Activated CD8-positive, alpha-beta T cell treated with anti-CD3 and anti-CD28 coated beads, Interleukin-2, amount 10 ng/mL, durations not matched to agents 7 days and 5 days (primary cell): ENCODE measurements at regions of chr2 and their contacts with region 1.

Region 1: GRCh38 chr2:113248997-113249770 is 29.5 kb downstream of the PAX8 start:
- DNase-seq: peak; percentile 86
- ATAC-seq: peak; percentile 69
- H3K4me3 Mint-ChIP-seq: no peak overlapping the region
- H3K27ac Mint-ChIP-seq: peak overlapping the region; percentile 77
- H3K4me1 Mint-ChIP-seq: peaks cover 56% of the 10 kb centered on the region
- H3K27me3 Mint-ChIP-seq: no peaks in the 10 kb centered on the region

Region 2: DNA sequence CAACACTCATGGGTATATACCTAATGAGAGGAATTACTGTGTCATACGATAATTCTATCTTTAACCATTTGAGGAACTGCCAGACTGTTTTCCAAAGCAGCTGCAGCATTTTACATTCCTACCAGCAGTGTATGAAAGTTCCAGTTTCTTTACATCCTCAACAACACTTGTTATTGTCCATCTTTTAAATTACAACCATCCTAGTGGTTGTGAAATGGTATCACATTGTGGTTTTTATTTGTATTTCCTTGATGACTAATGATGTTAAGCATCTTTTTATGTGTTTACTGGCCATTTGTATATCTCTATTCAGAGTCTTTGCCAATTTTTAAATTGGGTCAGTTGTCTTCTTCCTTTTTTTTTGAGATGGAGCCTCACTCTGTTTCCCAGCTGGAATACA is 480.8 kb before region 1 on chr2:
- CTCF ChIA-PET with region 1: no interaction called
- POLR2A ChIA-PET with region 1: no interaction called
- DNase-seq: no peak
- ATAC-seq: no peak
- H3K4me3 Mint-ChIP-seq: no peak overlapping the region
- H3K27ac Mint-ChIP-seq: no peak overlapping the region
- H3K4me1 Mint-ChIP-seq: peaks cover 32% of the 10 kb centered on the region
- H3K27me3 Mint-ChIP-seq: no peaks in the 10 kb centered on the region

Region 3: DNA sequence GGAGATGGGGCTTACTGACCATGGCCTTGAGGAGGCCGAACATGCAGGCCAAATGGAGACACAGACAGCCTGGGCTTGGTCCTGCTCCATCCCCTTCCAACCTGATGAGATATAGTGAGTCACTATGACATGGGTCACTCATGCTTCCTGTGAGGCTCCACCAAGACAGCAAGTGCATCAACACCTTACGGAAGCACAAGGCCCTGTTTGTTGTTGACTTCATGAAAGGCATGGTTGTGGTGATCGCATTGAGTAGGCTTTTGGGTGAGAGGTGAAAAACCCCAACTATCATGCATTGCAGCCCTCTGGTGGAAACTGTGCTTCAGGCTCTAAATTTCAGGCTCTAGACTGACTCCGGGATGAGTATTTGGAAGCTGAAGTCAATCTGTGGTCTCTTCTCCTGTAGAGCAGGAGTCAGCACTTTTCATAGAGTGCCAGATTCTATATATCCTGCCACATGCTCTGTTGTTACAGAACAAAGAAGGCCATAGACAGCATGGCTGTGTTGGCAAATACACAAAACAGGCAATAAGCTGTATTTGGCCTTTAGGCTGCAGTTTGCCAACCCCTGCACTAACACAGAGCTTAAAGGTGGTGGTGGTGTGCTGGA is 328.2 kb before region 1 on chr2:
- CTCF ChIA-PET with region 1: no interaction called
- POLR2A ChIA-PET with region 1: no interaction called
- DNase-seq: peak; percentile 24
- ATAC-seq: peak; percentile 49
- H3K4me3 Mint-ChIP-seq: no peak overlapping the region
- H3K27ac Mint-ChIP-seq: peak overlapping the region; percentile 41
- H3K4me1 Mint-ChIP-seq: peaks cover 8% of the 10 kb centered on the region
- H3K27me3 Mint-ChIP-seq: peaks cover 2% of the 10 kb centered on the region

Region 4: DNA sequence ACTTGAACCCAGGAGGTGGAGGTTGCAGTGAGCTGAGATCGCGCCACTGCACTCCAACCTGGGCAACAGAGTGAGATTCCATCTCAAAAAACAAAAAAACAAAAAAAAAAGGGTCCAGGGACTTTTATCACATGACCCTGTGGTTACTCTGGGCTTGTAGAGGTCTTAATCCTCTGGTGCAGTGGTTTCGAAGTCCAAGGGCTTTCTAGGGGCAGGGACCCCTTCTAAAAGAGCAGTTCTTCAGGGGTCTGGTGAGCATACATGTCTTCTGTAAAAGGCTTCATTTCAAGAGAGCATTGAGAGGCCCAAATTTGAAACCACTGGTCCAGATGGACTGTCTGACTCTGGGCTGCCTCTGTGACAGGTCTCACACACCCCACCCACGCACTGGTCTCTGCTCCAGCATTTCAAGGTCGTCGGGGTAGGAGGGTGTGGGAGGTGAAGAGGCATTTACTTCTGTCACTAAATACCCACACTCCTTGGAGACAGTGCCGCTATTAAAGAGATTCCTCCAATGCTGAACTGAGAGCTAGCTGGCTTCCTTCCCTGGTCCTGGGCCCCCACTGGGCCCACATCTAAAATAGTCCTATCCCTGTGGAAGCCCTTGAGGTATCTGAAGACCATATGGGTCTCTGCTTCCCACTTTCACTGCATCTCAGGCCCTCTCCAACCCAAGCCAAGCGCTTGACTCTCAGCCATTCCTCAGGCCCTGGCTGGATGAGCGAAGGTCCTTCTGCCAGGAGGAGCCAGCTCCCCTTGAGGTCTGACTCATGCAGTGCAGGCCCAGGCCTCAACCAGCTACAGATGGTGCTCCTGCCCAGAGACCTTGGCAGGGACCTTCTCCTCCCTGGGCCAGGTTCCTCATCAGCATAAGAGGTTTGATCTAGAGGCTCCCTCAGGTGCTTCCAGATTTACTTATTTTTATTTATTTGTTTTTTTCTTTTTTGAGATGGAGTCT is 15.3 kb before region 1 on chr2:
- CTCF ChIA-PET with region 1: interaction called, 28 read pairs
- POLR2A ChIA-PET with region 1: interaction called, 3 read pairs
- DNase-seq: no peak
- ATAC-seq: no peak
- H3K4me3 Mint-ChIP-seq: no peak overlapping the region
- H3K27ac Mint-ChIP-seq: no peak overlapping the region
- H3K4me1 Mint-ChIP-seq: peaks cover 33% of the 10 kb centered on the region
- H3K27me3 Mint-ChIP-seq: peaks cover 2% of the 10 kb centered on the region

Region 5: GRCh38 chr2:113273027-113273551 is 23.9 kb after region 1 on chr2:
- CTCF ChIA-PET with region 1: interaction called, 65 read pairs
- POLR2A ChIA-PET with region 1: interaction called, 4 read pairs
- DNase-seq: peak; percentile 73
- ATAC-seq: peak; percentile 96
- H3K4me3 Mint-ChIP-seq: peak overlapping the region; percentile 43
- H3K27ac Mint-ChIP-seq: no peak overlapping the region
- H3K4me1 Mint-ChIP-seq: peaks cover 35% of the 10 kb centered on the region
- H3K27me3 Mint-ChIP-seq: peaks cover 67% of the 10 kb centered on the region

Region 6: DNA sequence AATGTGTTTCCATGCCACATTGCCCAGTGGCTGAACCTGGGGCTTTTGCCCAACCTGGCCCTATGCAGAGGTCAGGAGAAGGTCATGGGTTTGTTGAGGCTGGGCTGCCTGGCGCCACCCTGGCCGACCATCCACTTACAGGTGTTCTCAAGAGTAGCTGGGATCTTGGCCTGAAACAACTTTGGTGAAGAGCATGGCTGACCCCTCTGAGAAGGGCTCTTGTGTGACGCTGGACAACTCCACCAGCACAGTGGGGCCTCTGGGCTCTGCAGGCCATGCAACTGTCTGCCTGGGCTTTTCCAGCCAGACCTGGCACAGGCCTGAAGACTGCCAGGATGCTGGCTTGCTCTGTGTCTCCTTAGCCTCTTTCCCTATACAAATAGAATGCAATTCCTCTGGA is 111.9 kb after region 1 on chr2:
- CTCF ChIA-PET with region 1: interaction called, 15 read pairs
- POLR2A ChIA-PET with region 1: no interaction called
- DNase-seq: no peak
- ATAC-seq: no peak
- H3K4me3 Mint-ChIP-seq: no peak overlapping the region
- H3K27ac Mint-ChIP-seq: no peak overlapping the region
- H3K4me1 Mint-ChIP-seq: peaks cover 63% of the 10 kb centered on the region
- H3K27me3 Mint-ChIP-seq: peaks cover 3% of the 10 kb centered on the region

Region 7: DNA sequence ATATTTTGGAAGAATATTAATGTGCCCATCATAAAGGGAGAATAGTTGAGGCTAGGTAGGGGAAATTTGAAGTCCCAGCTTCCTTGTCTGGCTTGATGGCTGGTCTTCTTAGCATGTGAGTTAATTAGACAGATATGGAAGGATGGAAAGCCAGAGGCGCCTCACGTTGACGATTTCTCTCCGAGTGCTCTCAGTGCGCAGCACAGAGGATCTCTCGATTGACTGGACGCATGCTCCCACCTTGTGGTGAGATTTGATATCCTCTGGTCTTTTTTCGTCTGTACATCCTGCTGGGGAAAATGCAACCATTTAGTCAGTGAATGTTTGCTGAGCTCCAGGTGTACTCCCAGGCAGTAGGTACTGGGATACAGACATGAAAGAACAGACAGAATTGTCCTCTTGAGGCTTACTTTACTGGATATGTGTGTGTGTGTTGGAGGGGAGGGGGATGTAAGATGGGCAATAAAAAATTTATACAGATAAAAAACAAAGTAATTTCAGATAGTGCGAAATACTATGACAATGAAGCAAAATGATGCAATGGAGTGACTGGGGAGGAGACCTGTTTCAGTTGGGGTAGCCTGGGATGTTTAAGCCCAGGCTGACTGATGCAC is 121.4 kb after region 1 on chr2:
- CTCF ChIA-PET with region 1: interaction called, 81 read pairs
- POLR2A ChIA-PET with region 1: no interaction called
- DNase-seq: peak; percentile 86
- ATAC-seq: peak; percentile 99
- H3K4me3 Mint-ChIP-seq: no peak overlapping the region
- H3K27ac Mint-ChIP-seq: no peak overlapping the region
- H3K4me1 Mint-ChIP-seq: peaks cover 35% of the 10 kb centered on the region
- H3K27me3 Mint-ChIP-seq: peaks cover 11% of the 10 kb centered on the region

Region 8: DNA sequence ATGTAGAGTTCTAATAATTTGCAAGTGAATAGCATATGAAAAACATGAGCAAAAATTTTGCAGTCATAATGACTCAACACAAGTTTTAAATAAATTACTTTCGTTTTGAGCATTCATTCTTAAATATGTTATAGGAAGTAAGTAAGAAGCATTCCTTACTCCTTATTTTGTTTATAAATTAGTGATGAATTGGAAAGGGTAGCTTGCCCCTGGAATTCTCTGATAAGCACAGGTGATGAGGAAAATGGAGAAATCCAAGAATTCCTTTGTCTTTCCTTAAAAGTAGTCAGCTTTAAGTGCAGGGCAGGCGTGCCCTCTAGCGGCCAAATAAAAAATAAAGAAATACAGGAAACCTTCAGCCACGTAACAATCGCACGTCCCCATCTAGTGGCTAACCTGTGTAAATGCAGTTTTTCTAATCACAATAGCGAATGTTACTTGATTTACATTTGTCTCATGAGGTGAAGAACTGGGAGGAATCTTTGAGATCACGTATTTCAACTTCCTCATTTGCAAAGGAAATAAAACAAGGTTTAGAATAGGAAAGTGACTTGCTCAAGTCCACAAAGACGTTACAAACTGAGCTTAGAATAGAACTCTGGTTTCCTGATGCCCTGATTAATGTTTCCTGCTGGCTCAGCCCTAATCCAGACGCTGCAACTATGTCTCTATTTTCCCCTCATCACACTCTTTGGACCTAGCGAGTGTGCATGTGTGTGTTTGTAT is 141.1 kb after region 1 on chr2:
- CTCF ChIA-PET with region 1: interaction called, 50 read pairs
- POLR2A ChIA-PET with region 1: no interaction called
- DNase-seq: peak; percentile 73
- ATAC-seq: peak; percentile 90
- H3K4me3 Mint-ChIP-seq: peak overlapping the region; percentile 74
- H3K27ac Mint-ChIP-seq: peak overlapping the region; percentile 82
- H3K4me1 Mint-ChIP-seq: peaks cover 15% of the 10 kb centered on the region
- H3K27me3 Mint-ChIP-seq: peaks cover 20% of the 10 kb centered on the region